IMR-90 (cell line): ENCODE measurements at regions of chr3 and their contacts with region 1.

Region 1: GRCh38 chr3:125055913-125056745 is at the start of gene HEG1:
- DNase-seq: peak; percentile 77
- ATAC-seq: peak; percentile 73
- H3K4me3 ChIP-seq: peak within 1 kb of the TSS; percentile 96
- H3K27ac ChIP-seq: peak within 1 kb of the TSS; percentile 94
- H3K4me1 ChIP-seq: peaks cover 32% of the 10 kb centered on the region
- H3K27me3 ChIP-seq: no peaks in the 10 kb centered on the region
- CTCF ChIP-seq: no peak
- POLR2A ChIP-seq: peak; percentile 55; the same call in 1 of the 2 replicates
- RAD21 ChIP-seq: no peak
- total RNA-seq, gene HEG1: 23.9 and 25.6 TPM in 2 replicates

Region 2: DNA sequence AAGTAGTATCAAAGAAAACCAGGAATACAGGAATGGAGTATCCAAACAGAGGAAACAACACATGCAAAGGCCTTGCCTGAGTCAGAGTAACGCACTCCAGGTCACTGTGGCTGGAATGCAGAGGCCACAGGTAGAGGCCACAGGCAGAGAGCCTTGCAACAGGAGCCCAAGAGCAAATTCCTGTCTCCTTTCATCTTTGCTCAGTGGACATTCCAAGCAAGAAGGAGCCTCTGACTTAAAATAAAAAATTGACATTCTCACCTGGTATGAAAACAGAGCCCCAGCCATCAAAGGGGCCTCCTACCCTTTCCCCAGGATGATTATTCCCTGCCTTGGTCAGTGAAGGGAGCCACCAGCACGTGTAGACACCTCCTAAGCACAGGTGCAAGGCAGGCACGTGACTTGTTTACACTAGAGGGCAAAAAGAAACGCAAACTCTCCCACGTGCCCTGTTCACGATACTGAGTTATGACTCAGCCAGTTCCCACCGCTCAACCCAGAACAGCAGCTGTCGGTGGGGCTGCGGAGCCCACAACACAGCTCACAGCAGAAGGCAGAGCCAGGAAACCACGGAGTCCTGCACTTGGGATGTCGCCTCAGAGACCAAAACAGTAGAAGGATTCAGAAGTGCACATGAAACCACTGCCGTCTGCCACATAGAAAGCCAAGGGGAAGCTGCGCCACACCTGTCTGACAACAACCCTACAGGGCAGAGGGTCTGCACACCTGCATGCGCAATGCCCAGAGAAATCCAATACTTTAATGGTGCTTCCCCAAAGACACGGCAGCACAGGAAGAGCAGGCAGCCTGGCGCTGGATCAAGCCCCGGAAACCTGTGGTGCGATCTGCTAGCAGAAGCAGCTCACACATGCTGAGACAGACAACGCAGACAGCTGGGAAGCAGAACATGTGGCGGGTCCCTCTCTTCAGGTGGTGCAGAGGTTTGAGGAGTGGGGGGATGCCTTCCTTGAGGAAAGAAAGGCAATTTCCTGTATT is 221.1 kb before region 1 on chr3:
- CTCF ChIA-PET with region 1: no interaction called
- POLR2A ChIA-PET with region 1: no interaction called
- dilution Hi-C with region 1: no loop called
- in situ Hi-C with region 1: no loop called
- intact Hi-C with region 1: no loop called
- DNase-seq: peak; percentile 98
- ATAC-seq: peak; percentile 56
- H3K4me3 ChIP-seq: no peak overlapping the region
- H3K27ac ChIP-seq: peak overlapping the region; percentile 38
- H3K4me1 ChIP-seq: peaks cover 34% of the 10 kb centered on the region
- H3K27me3 ChIP-seq: no peaks in the 10 kb centered on the region
- CTCF ChIP-seq: no peak
- POLR2A ChIP-seq: no peak; the same call in 1 of the 2 replicates
- RAD21 ChIP-seq: no peak; the same call in 1 of the 2 replicates

Region 3: DNA sequence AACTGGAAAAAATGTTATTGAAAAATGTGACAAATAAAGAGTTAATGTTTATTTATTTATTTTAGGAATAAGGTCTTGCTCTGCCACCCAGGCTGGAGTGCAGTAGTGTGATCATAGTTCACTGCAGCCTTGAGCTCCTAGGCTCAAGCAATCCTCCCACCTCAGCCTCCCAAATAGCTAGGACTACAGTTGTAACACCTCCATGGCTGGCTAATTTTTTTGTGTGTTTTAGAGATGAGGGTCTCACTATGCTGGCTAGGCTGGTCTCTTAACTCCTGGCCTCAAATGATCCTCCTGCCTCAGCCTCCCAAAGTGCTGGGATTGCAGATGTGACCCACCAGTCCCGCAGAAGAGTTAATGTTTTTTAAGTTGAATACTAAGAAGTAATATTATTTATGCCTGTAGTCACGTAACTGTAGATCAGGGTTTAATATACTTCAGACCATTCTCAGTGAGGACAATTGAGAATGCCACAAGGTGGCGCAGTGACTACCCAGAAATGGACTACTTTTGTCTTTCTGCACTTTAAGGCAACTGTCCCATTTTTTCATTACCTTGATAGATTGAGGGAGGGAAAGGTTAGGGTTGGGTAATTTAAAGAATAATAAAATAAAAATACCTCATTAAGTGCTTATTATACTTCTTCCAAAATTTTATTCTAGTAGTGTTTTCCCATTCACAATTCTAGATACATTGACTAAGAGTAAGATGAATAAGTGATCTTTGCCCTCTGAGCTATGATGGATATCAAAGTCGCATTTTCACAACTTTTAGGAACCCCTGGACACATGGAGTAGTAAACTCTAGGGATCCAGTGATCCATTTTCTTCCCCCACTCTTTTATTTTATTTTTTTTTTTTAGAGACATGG is 127.6 kb before region 1 on chr3:
- CTCF ChIA-PET with region 1: no interaction called
- POLR2A ChIA-PET with region 1: no interaction called
- dilution Hi-C with region 1: no loop called
- in situ Hi-C with region 1: no loop called
- intact Hi-C with region 1: loop called (anchors 5 kb)
- DNase-seq: peak; percentile 74
- ATAC-seq: peak; percentile 80
- H3K4me3 ChIP-seq: no peak overlapping the region
- H3K27ac ChIP-seq: no peak overlapping the region
- H3K4me1 ChIP-seq: peaks cover 2% of the 10 kb centered on the region; the same call in 1 of the 2 replicates
- H3K27me3 ChIP-seq: peaks cover 13% of the 10 kb centered on the region
- CTCF ChIP-seq: peak; percentile 79
- POLR2A ChIP-seq: no peak
- RAD21 ChIP-seq: peak; percentile 78

Region 4: GRCh38 chr3:125129512-125129962 is 73.4 kb after region 1 on chr3:
- CTCF ChIA-PET with region 1: interaction called, 3 read pairs
- POLR2A ChIA-PET with region 1: interaction called, 4 read pairs
- dilution Hi-C with region 1: no loop called
- in situ Hi-C with region 1: no loop called
- intact Hi-C with region 1: loop called (anchors 5 kb)
- DNase-seq: peak; percentile 99
- ATAC-seq: peak; percentile 82
- H3K4me3 ChIP-seq: no peak overlapping the region
- H3K27ac ChIP-seq: peak overlapping the region; percentile 81
- H3K4me1 ChIP-seq: peaks cover 25% of the 10 kb centered on the region
- H3K27me3 ChIP-seq: no peaks in the 10 kb centered on the region
- CTCF ChIP-seq: no peak
- POLR2A ChIP-seq: no peak
- RAD21 ChIP-seq: 0 out of 2 replicates have a peak, but pooled peaks have one; percentile 5

Region 5: DNA sequence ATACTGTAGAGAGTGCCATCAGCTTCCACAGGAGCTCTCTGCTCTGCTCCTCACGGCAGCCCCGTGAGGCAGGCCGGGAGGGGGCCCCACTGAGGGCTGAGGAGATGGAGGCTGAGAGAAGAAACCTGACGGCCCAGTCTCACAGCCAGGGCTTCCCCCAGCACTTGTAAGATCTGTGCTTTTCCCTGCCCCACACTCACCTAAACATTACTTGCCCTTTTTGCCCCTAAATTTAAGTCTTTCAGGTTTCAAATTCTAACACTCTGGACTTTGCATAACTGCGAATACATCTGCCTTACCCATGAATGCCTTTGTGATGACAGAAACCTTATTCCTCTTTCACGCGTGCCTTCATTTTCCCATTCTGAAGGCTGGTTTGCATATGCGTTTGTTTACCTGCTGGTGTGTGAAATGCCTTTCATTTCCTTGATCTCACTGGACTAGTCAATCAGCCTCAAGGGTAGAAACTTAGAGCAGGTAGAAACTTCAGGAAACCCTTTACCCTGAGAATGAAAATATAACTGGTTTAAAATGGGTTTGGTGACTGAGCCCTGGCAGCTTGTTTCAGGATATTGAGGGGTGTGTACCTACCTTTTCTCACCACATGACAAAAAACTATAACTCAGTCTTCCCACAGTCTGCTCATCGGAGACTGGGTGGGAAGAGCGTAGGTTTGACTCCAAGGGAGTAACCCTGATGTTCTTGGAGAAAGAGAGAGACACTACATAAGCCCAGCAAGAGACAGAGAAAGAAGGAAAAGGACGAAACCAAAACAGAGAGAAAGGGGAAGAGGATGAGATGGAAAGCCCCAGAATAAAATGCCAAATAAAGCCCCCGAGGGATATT is 136.3 kb after region 1 on chr3:
- CTCF ChIA-PET with region 1: interaction called, 4 read pairs
- POLR2A ChIA-PET with region 1: no interaction called
- dilution Hi-C with region 1: no loop called
- in situ Hi-C with region 1: no loop called
- intact Hi-C with region 1: loop called (anchors 1 kb)
- DNase-seq: no peak
- ATAC-seq: no peak
- H3K4me3 ChIP-seq: no peak overlapping the region
- H3K27ac ChIP-seq: no peak overlapping the region
- H3K4me1 ChIP-seq: peaks cover 17% of the 10 kb centered on the region
- H3K27me3 ChIP-seq: 0 out of 2 replicates have a peak, but pooled peaks cover 1% of the 10 kb centered on the region
- CTCF ChIP-seq: no peak
- POLR2A ChIP-seq: no peak
- RAD21 ChIP-seq: no peak

Region 6: GRCh38 chr3:125437631-125438435 is 381.7 kb after region 1 on chr3:
- CTCF ChIA-PET with region 1: no interaction called
- POLR2A ChIA-PET with region 1: no interaction called
- dilution Hi-C with region 1: no loop called
- in situ Hi-C with region 1: no loop called
- intact Hi-C with region 1: loop called (anchors 2 kb)
- DNase-seq: peak; percentile 39
- ATAC-seq: peak; percentile 89
- H3K4me3 ChIP-seq: no peak overlapping the region
- H3K27ac ChIP-seq: no peak overlapping the region
- H3K4me1 ChIP-seq: peaks cover 5% of the 10 kb centered on the region; the same call in 1 of the 2 replicates
- H3K27me3 ChIP-seq: no peaks in the 10 kb centered on the region
- CTCF ChIP-seq: peak; percentile 91
- POLR2A ChIP-seq: no peak
- RAD21 ChIP-seq: peak; percentile 93